ENCODE measurements at regions of chr3 and their contacts with region 1.

Region 1: DNA sequence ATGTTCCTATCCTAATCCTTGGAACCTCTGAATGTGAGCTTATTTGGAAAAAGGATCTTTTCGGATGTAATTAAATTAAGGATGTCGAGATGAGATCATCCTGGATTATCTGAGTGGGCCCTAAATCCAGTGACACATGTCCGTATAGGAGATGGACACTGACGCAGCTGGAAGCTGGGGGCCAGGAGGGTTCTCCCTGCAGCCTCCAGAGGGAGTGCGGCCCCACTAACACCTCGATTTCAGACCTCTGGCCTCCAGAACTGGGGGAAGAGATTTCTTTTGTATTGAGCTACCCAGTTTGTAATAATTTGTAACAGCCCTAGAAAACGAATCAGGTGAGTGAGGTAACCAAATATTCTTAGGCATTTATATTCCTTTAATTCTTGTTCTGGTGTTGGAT is 2.5 kb downstream of the DNAJB8 start:
- DNase-seq: no peak
- H3K4me3 ChIP-seq: no peak overlapping the region
- H3K27ac ChIP-seq: no peak overlapping the region
- H3K4me1 ChIP-seq: peaks cover 0 to 58% of the 10 kb centered on the region in 2 experiments; a peak in 1 of 4 replicates
- H3K27me3 ChIP-seq: peaks cover 5% of the 10 kb centered on the region; the same call in 1 of the 2 replicates
- CTCF ChIP-seq: peak; percentile 16; the same call in 1 of the 2 replicates
- EP300 ChIP-seq: no peak
- RAD21 ChIP-seq: no peak; the same call in 1 of the 2 replicates

Region 2: DNA sequence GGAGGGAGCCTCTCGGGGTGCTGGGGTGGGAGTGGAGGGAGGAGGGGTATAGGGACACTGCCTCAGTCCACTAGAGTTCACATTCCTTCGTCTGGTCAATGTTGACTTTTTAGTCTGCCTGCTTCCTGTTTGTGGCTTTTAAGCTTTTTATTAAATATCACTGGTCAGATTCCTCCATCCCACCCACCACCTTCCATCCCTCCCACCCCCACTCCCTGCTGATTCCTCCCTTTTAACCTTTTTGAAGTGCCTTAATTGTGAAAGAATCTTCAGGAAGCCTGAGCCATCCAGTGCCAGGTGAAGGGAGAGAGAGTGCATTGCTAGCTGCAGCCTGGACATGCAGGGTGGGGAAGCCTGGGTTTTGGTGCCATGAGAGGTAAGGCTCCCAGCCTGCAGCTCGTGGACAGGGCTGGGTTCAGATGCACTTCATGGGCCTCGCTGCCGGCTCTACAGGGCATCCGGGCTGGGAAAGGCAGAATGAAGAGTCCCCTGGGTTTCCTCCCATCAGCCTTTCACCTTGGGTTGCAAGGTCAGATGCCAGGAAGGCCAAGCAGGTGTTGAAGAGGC is 103.4 kb before region 1 on chr3:
- CTCF ChIA-PET with region 1: no interaction called
- POLR2A ChIA-PET with region 1: no interaction called
- DNase-seq: no peak
- H3K4me3 ChIP-seq: no peak overlapping the region
- H3K27ac ChIP-seq: no peak overlapping the region
- H3K4me1 ChIP-seq: peaks cover 7 to 60% of the 10 kb centered on the region in 2 experiments; a peak in 1 of 4 replicates
- H3K27me3 ChIP-seq: no peaks in the 10 kb centered on the region
- CTCF ChIP-seq: no peak
- EP300 ChIP-seq: no peak
- RAD21 ChIP-seq: no peak

Region 3: GRCh38 chr3:128416578-128417211 is 47.5 kb before region 1 on chr3:
- CTCF ChIA-PET with region 1: interaction called, 5 read pairs
- POLR2A ChIA-PET with region 1: interaction called, 66 read pairs
- DNase-seq: peak; percentile 55
- H3K4me3 ChIP-seq: no peak overlapping the region
- H3K27ac ChIP-seq: peak overlapping the region in 1 of 2 experiments; percentile 100; a peak in 3 of 4 replicates
- H3K4me1 ChIP-seq: peaks cover 0 to 81% of the 10 kb centered on the region in 2 experiments; a peak in 1 of 4 replicates
- H3K27me3 ChIP-seq: no peaks in the 10 kb centered on the region
- CTCF ChIP-seq: no peak
- EP300 ChIP-seq: no peak
- RAD21 ChIP-seq: no peak

Region 4: GRCh38 chr3:128476659-128477058 is 12.5 kb after region 1 on chr3:
- CTCF ChIA-PET with region 1: interaction called, 7 read pairs
- POLR2A ChIA-PET with region 1: interaction called, 68 read pairs
- DNase-seq: no peak
- H3K4me3 ChIP-seq: no peak overlapping the region
- H3K27ac ChIP-seq: peak overlapping the region in 1 of 2 experiments; percentile 39; a peak in 2 of 4 replicates
- H3K4me1 ChIP-seq: peaks cover 0 to 55% of the 10 kb centered on the region in 2 experiments; a peak in 1 of 4 replicates
- H3K27me3 ChIP-seq: peaks cover 7% of the 10 kb centered on the region
- CTCF ChIP-seq: no peak
- EP300 ChIP-seq: no peak
- RAD21 ChIP-seq: no peak

Region 5: DNA sequence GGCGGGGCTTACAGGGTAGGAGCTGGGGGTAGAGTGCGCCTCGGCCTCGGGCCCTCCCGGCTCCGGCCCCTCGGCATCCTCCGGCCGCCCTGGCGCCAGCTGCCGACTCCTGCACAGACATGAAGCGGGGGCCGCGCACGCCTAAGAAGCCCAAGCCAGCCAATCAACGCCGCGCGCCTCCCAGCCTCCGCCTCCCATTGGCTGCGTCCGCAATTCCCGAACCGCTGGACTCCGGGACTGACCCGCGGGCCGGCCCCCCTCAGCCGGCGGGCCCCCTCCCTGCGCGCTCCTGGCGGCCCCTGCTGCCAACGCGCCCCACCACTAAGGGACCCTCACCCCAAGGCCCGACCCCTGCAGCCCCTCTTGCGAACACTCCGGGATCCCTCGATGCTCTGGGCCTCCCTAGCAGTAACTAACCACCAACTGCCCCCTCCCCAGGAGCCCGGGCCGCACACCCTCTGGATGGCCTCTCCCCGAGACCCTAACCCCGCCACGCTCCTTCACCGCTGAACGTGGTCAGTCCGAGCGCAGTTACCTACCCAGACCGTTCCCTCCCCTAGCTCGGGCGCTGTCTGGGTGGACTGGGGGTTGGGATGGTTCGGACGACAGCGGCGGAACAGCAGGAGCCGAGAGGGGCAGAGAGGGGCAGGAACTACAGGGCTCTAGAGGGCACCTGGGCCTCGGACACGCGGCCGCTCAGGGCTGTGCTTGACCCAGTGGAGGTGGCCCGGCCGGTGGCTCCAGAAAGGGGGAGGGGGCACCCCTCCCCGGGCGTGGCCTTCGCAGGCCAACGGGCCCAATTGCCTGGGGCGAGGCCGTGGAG is 23.8 kb after region 1 on chr3:
- CTCF ChIA-PET with region 1: interaction called, 9 read pairs
- POLR2A ChIA-PET with region 1: interaction called, 68 read pairs
- DNase-seq: peak; percentile 82
- H3K4me3 ChIP-seq: peak overlapping the region; percentile 75 to 77
- H3K27ac ChIP-seq: peak overlapping the region; percentile 36 to 97
- H3K4me1 ChIP-seq: peaks cover 4 to 8% of the 10 kb centered on the region in 2 experiments; a peak in 3 of 4 replicates
- H3K27me3 ChIP-seq: peaks cover 23% of the 10 kb centered on the region; the same call in 1 of the 2 replicates
- CTCF ChIP-seq: no peak
- EP300 ChIP-seq: no peak
- RAD21 ChIP-seq: no peak

Region 6: DNA sequence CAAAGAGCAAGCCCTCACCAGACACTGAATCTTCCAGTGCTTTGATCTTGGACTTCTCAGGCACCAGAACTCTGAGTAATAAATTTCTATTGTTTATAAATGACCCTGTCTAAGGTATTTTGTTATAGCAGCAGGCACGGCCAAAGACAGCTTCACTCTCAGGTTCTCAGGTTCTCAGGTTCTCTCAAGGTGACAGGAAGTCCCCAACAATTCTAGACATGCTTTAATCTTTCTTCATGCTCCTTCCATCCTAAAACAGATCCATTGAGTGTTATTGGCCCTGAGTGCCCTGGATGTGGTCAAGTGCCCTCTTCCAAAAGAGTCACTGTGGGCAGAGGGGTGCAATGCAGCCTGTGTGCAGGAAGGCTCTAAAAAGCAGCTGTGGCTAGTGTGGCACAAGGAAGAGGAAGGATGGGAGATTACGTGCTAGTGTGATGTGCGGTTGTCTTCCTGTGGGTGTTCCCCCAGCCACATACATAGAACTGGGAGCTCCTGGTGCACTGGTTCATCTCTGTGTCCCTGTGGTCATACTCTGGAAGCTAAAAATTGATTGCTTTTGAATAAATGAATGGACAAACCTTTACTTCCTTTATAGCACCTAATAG is 250.8 kb after region 1 on chr3:
- CTCF ChIA-PET with region 1: no interaction called
- POLR2A ChIA-PET with region 1: no interaction called
- DNase-seq: no peak
- H3K4me3 ChIP-seq: no peak overlapping the region
- H3K27ac ChIP-seq: no peak overlapping the region
- H3K4me1 ChIP-seq: no peaks in the 10 kb centered on the region
- H3K27me3 ChIP-seq: no peaks in the 10 kb centered on the region; the same call in 1 of the 2 replicates
- CTCF ChIP-seq: no peak
- EP300 ChIP-seq: no peak
- RAD21 ChIP-seq: no peak

Region 7: DNA sequence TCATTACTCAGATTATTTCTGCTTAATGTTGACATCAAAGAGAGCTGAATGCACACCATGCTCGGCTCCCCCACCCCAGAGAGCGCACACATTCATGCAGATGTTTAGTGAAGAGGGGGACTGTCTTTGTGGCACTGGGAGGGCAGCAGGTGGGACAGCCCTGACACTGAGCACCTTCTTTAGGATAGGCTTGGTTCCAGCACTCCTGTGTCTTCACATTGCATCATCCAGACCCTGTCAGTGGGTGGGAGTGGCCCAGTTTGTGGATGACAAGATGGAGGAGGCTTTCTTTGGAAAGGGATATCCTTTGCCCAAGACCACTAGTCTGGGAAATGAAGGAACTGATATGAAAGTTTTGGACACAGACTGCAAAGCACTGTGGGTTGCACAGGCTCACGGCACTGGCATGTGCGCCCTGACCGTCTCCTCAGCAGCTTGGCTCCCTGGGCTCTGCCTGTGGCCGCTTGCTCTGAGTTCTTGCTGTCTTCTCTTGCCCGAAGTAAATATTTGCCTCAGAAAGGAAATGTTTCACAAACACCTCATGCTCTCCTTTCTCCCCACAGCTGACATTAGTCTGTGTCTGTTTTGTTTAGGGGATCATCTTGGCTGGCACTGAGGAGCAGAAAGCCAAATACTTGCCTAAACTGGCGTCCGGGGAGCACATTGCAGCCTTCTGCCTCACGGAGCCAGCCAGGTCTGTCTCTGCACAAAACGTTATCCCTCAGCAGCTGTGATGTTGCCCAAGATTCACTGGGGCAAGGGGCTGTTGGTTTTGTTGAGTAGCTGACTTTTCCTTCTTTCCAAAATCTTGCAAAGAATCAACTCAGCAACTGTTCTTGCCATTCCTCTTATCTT is 431.9 kb after region 1 on chr3:
- CTCF ChIA-PET with region 1: no interaction called
- POLR2A ChIA-PET with region 1: no interaction called
- DNase-seq: no peak
- H3K4me3 ChIP-seq: no peak overlapping the region
- H3K27ac ChIP-seq: no peak overlapping the region
- H3K4me1 ChIP-seq: no peaks in the 10 kb centered on the region
- H3K27me3 ChIP-seq: no peaks in the 10 kb centered on the region
- CTCF ChIP-seq: no peak
- EP300 ChIP-seq: no peak
- RAD21 ChIP-seq: no peak

Measured in SK-N-SH (cell line).